HEK293 (cell line): ENCODE measurements at regions of chr18 and their contacts with region 1.

Region 1: DNA sequence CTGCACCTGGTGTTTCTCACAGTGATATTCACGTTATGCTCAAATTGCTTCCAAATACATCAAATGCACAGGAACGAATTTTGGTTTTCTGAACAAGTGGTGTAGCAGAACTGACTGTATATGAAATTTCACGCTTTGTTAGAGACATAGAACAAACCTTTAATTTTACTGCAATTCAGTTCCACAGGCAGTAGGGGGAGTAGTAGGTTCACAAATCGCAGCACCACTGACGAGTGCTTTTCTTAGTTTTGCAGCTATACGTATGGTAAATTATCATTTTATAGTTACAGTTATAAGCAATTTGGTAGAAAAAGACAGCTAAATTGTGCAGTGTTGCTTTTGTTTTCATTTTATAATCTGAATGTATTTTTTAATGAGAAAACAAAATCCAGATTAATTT is 113.3 kb downstream of the KIAA1328 start:
- H3K4me3 ChIP-seq: no peak overlapping the region
- H3K27ac ChIP-seq: no peak overlapping the region
- H3K4me1 ChIP-seq: no peaks in the 10 kb centered on the region
- CTCF ChIP-seq: no peak

Region 2: GRCh38 chr18:36392164-36392978 is 549.9 kb before region 1 on chr18:
- CTCF ChIA-PET with region 1: no interaction called
- POLR2A ChIA-PET with region 1: no interaction called
- H3K4me3 ChIP-seq: no peak overlapping the region
- H3K27ac ChIP-seq: no peak overlapping the region
- H3K4me1 ChIP-seq: no peaks in the 10 kb centered on the region
- CTCF ChIP-seq: no peak

Region 3: DNA sequence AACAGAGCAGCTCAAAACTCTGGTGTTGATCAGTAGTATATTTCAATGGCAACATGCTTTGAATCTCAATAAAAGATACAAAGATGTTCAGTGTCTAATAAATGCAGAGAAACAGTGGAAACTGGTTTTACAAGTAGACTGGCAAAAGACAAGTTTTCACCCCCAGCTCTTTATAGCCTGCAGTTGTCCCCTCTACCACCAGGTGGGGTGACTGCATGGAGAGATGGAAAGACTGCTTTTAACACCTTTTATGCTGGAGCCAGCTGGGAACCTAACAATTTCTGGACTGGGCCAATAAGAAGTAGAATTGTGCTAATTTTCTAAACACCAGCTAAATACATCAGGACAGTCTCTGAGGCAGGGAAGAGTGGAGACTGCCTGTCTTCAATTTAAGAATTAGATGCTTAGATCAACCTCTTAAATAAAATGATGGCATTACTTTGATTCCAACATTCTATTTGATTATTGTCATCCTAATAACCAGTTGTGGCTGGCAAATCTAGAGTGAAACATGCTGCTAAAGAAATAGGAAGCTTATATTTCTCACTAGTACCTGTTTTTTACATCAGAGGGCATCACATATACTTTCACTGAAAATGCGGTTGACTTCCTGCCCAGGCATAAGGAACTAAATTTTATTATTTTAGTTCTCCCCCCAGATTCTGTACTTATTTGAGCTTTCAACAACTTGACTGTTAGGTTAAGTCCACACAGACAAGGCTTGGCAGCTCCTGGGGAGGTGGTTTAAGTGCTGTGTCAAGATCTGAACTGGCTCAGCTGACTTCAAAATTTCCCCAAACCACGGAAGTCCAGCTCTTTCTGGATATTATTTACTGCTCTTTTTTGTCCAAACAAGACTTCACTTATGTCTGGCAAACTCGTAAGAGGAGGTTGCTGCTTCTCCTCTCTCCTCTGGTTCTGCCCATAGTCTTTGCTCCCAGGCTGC is 254.0 kb before region 1 on chr18:
- CTCF ChIA-PET with region 1: no interaction called
- POLR2A ChIA-PET with region 1: no interaction called
- H3K4me3 ChIP-seq: no peak overlapping the region
- H3K27ac ChIP-seq: no peak overlapping the region
- H3K4me1 ChIP-seq: no peaks in the 10 kb centered on the region
- CTCF ChIP-seq: 0 out of 2 replicates have a peak, but pooled peaks have one; percentile 35

Region 4: GRCh38 chr18:36931106-36931505 is 11.2 kb before region 1 on chr18:
- CTCF ChIA-PET with region 1: interaction called, 13 read pairs
- POLR2A ChIA-PET with region 1: no interaction called
- H3K4me3 ChIP-seq: no peak overlapping the region
- H3K27ac ChIP-seq: no peak overlapping the region
- H3K4me1 ChIP-seq: no peaks in the 10 kb centered on the region
- CTCF ChIP-seq: no peak